ENCODE measurements at regions of chr17 and their contacts with region 1.

Region 1: GRCh38 chr17:49567871-49568694 is 7.6 kb upstream of the NXPH3 start:
- DNase-seq: peak; percentile 83
- CTCF ChIP-seq: peak; percentile 98

Region 2: GRCh38 chr17:49298371-49298976 is 269.6 kb before region 1 on chr17:
- CTCF ChIA-PET with region 1: no interaction called
- POLR2A ChIA-PET with region 1: no interaction called
- DNase-seq: no peak
- CTCF ChIP-seq: no peak

Region 3: GRCh38 chr17:49438436-49439278 is 129.4 kb before region 1 on chr17:
- CTCF ChIA-PET with region 1: no interaction called
- POLR2A ChIA-PET with region 1: no interaction called
- DNase-seq: peak; percentile 48
- CTCF ChIP-seq: peak; percentile 13

Region 4: GRCh38 chr17:49548506-49549310 is 19.4 kb before region 1 on chr17:
- CTCF ChIA-PET with region 1: no interaction called
- POLR2A ChIA-PET with region 1: no interaction called
- DNase-seq: peak; percentile 64
- CTCF ChIP-seq: peak; percentile 76

Region 5: DNA sequence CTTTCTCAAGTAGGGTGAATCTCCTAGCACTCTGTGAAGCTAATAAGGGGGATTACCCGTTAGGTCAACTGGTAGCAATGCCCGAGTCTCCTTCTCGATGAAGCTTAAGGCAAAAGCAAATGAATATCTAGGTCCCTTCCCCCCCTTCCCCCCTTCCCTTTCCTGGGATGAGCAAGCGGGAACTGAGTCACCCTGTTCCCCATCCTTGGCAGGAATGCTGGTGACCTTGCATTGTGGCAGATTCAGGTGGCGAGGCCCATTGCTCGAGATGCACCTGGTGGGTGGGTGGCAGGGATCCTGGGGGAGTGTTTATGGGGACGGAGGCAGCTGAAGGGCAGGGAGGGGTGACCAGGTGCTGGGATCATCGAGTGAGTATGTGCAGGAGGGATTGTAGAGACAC is 14.7 kb after region 1 on chr17:
- CTCF ChIA-PET with region 1: interaction called, 20 read pairs
- POLR2A ChIA-PET with region 1: no interaction called
- DNase-seq: no peak
- CTCF ChIP-seq: no peak

Region 6: DNA sequence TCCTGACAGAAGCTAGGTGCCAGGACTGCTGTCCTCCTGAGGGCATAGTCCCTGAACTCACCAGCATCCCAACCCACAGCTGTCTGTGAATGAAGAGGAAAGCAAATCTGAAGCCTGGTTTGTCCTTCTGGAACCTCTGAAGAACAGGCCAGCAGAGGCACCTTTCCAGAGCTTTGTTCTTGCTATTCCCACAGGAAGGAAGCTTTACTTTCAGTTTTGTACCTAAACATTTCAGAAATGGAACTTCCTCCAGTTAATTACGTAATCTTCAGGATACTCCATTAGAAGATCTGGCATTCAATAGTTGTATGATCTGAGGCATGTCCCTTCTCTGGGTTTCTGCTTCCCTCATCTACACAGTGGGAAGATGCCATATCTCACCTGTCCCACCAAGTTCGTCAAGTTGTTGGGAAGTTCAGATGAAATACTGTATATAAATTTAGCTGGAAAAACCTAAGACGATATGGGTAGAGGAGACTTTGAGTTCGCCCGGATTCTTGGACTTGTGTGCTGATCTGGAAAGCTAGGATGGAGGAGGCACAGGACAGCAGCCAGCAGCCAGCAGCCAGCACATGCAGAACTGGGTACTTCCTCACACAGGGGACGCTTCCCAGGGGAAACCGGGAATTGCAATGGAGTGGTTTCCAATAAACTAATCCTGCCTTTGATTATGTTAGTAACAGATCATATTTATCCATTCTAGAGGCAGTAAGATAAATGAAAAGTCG is 30.0 kb after region 1 on chr17:
- CTCF ChIA-PET with region 1: interaction called, 22 read pairs
- POLR2A ChIA-PET with region 1: no interaction called
- DNase-seq: no peak
- CTCF ChIP-seq: no peak

Region 7: GRCh38 chr17:49646391-49647255 is 78.5 kb after region 1 on chr17:
- CTCF ChIA-PET with region 1: interaction called, 12 read pairs
- POLR2A ChIA-PET with region 1: no interaction called
- DNase-seq: peak; percentile 48
- CTCF ChIP-seq: no peak

Region 8: GRCh38 chr17:49763735-49764558 is 195.9 kb after region 1 on chr17 and contains the start of gene FAM117A:
- CTCF ChIA-PET with region 1: interaction called, 10 read pairs
- POLR2A ChIA-PET with region 1: interaction called, 3 read pairs
- DNase-seq: peak; percentile 99
- CTCF ChIP-seq: no peak